AG04449 (cell line): ENCODE measurements at regions of chr5 and their contacts with region 1.

Region 1: GRCh38 chr5:138549414-138549813 is 6.4 kb upstream of the ETF1 start:
- DNase-seq: no peak
- H3K4me3 ChIP-seq: no peak overlapping the region
- CTCF ChIP-seq: no peak

Region 2: GRCh38 chr5:138559937-138560336 is 10.5 kb after region 1 on chr5:
- CTCF ChIA-PET with region 1: interaction called, 14 read pairs
- POLR2A ChIA-PET with region 1: interaction called, 4 read pairs
- DNase-seq: no peak
- H3K4me3 ChIP-seq: no peak overlapping the region
- CTCF ChIP-seq: no peak

Region 3: DNA sequence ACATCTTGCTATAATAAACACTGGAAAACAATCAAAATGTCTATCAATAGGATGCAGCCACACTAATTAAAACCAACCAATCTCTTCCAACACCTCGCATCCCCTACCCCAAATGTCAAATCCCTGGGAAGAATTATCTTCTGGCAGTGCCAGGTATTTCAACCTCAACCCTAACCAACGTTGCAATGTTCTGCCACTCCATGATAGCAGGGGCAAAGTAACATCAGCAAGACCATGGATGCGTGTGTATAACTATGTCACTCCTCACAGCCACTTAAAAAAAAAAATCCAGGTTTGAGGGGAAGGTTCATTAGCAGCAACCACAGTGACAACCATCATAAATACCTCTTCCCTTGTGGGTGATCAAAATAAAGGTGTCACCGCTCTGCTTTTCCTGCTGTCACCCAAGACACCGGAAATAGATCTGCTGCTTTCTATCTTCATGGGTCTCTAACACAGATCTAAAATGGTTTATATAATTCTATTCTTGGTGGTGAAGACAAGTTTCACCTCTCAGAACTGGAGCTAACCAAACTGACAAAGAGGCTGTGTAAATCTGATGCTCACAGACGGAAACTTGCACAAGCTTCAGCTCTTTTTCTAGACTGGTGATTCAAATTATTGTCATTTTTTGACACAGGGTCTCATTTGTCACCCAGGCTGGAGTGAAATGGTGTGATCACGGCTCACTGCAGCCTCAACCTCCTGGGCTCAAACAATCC is 15.8 kb after region 1 on chr5:
- CTCF ChIA-PET with region 1: interaction called, 14 read pairs
- POLR2A ChIA-PET with region 1: interaction called, 4 read pairs
- DNase-seq: no peak
- H3K4me3 ChIP-seq: no peak overlapping the region
- CTCF ChIP-seq: no peak